ENCODE measurements at regions of chr11 and their contacts with region 1.

Region 1: GRCh38 chr11:60504219-60504905 is 10.8 kb upstream of the MS4A13 start:
- DNase-seq: no peak
- H3K4me3 ChIP-seq: no peak overlapping the region
- H3K27ac ChIP-seq: no peak overlapping the region
- H3K27me3 ChIP-seq: no peaks in the 10 kb centered on the region
- CTCF ChIP-seq: no peak

Region 2: GRCh38 chr11:60357771-60358170 is 146.6 kb before region 1 on chr11:
- intact Hi-C with region 1: no loop called
- DNase-seq: no peak
- H3K4me3 ChIP-seq: no peak overlapping the region
- H3K27ac ChIP-seq: no peak overlapping the region
- H3K27me3 ChIP-seq: peaks cover 0 to 8% (median 0%) of the 10 kb centered on the region in 45 donors
- CTCF ChIP-seq: no peak

Region 3: DNA sequence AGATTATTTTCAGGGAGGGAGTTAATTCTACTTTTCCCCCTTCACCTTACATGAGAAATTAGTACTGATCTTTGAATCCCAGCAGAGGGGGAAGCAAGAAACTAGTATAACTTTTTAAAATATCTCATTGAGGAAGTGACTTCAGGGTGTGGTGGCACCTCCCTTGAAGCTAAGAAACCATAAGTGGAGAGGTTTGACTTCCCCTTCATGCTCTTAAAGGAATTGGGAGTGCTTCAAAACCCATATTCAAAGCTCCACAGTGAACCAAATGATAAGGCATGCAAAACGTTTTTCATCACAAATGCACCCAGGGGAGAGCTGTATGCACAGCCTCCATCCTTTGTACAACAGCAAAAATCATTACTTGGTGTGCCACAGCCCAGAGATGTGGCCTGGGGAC is 107.6 kb before region 1 on chr11:
- intact Hi-C with region 1: no loop called
- DNase-seq: no peak
- H3K4me3 ChIP-seq: no peak overlapping the region
- H3K27ac ChIP-seq: no peak overlapping the region
- H3K27me3 ChIP-seq: peaks cover 0 to 4% (median 0%) of the 10 kb centered on the region in 45 donors
- CTCF ChIP-seq: no peak

Region 4: GRCh38 chr11:60563553-60564235 is 59.3 kb after region 1 on chr11:
- intact Hi-C with region 1: loop called in 1 of 2 experiments (anchors 10 kb)
- DNase-seq: no peak
- H3K4me3 ChIP-seq: no peak overlapping the region
- H3K27ac ChIP-seq: no peak overlapping the region
- H3K27me3 ChIP-seq: no peaks in the 10 kb centered on the region
- CTCF ChIP-seq: no peak

Region 5: DNA sequence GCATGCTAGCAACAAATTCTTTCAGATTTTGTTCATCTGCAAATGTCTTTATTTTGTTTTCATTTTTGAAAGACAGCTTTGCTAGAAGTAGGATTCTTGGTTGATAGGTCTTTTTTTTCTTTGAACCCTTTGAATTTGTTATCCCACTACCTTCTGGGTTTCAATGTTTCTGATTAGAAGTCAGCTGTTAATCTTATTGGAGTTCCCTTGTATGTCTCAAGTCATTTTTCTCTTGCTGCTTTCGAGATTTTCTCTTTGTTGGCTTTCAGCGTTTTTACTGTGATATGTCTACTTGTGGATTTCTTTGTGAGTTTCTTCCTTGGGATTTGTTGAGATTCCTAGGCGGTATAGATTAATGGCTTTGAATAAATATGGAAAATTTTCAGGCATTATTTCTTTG is 167.9 kb after region 1 on chr11:
- intact Hi-C with region 1: no loop called
- DNase-seq: no peak
- H3K4me3 ChIP-seq: no peak overlapping the region
- H3K27ac ChIP-seq: no peak overlapping the region
- H3K27me3 ChIP-seq: peaks cover 0 to 7% (median 0%) of the 10 kb centered on the region in 45 donors
- CTCF ChIP-seq: no peak

Measured in dorsolateral prefrontal cortex (tissue), 120 donors.